Adrenal gland (tissue), 19 donors: ENCODE measurements at regions of chr1 and their contacts with region 1.

Region 1: DNA sequence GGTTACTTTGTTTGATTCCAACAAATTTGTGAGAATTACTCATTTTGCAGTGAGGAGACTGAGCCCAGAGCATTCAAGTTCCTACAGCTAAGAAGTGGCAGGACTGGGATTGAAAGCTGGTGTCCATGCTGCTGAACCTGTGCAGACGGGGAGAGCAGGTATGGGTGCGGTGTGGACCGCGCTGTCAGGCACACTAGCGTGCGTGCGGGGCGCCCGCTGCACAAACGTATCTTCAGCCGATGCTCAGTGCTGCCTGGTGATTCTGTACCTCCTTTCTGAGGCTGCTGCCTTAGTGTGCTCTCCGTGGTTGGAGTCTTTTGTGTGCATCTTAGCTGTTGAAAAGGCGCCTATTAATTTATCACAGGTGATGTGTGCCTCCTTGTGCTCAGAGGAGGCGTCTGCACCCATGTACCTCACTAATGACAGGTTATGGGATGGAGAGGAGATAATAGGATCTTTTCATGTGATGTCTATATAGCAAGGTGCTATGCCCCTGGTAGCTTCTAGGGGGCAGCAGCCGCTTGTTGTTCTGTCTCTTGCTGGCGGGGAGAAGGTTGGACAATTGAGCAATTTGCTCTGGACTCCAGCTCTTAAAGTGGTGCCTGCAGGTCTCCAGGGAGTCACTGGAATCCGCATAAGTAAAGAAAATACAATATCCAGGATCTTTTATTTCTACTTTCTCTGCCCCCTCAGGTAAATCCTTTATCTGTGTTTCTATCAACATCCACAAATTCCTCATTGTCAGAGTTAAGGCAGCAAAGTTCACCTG is 32.5 kb downstream of the PEX14 start:
- DNase-seq: peak; percentile 63 to 88 (median 78)
- H3K4me3 ChIP-seq: no peak overlapping the region
- H3K27ac ChIP-seq: no peak overlapping the region
- H3K4me1 ChIP-seq: peaks cover 15 to 42% of the 10 kb centered on the region in 2 donors
- H3K27me3 ChIP-seq: no peaks in the 10 kb centered on the region
- CTCF ChIP-seq: peak; percentile 70 to 92 (median 84)
- POLR2A ChIP-seq: no peak

Region 2: DNA sequence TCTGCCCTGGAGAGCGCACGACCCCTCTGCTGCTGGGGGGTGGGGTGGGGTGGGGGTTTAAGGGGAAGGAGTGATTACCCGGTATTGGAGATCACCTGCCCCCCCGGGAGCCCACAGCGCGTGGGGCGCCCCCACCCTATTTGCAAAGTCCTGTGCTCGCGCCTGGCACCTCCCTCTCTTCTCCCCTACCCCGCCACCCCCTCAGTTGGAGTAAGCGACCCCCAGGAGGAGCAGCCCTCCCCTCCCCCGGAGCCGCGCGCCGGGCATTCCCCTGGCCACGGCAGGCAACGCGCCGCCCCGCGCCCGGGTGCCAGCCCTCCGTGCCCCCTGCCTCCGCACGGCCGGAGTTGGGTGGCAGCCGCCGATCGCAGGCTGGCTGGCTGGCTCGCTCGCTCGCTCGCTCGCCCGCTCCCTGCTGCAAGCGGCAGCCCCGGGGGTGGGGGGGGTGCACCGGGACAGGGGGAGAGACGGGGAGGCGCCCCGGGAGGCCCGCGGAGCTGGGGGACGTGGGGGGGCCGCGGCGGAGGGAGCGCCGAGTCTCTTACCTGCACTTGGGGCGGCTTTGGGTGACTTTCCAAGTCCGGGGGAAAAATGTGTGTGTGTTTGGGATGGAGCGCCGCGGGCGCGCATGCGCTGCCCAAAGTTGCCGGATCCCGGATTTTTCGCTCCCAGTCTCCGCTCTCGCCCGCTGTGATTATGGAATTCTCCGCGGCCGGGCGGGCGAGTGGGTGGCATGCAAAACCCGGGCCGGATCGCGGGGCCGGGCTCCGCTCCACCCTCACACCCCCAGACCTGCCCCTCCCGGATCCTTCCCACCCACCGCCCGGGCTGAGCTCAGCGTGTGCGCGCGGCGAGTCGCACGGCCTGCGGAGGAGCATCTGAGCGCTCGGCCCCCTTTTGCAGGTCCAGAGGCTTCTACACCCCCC is 289.0 kb after region 1 on chr1 and contains the start of gene CASZ1:
- intact Hi-C with region 1: loop called (anchors 10 kb)
- DNase-seq: peak; percentile 81 to 89 (median 83)
- H3K4me3 ChIP-seq: peak within 1 kb of the TSS in 2 of 4 donors; percentile 43 to 69
- H3K27ac ChIP-seq: peak within 1 kb of the TSS in 1 of 5 donors; percentile 41
- H3K4me1 ChIP-seq: peaks cover 15 to 26% of the 10 kb centered on the region in 2 donors
- H3K27me3 ChIP-seq: no peaks in the 10 kb centered on the region
- CTCF ChIP-seq: peak in 1 of 6 experiments; percentile 35
- POLR2A ChIP-seq: peak; percentile 22 to 86
- total RNA-seq, gene CASZ1: 2.5 to 35.2 (median 7.5) TPM

Region 3: GRCh38 chr1:10867138-10867721 is 359.9 kb after region 1 on chr1:
- intact Hi-C with region 1: loop called (anchors 5 kb)
- DNase-seq: peak; percentile 40 to 77 (median 65)
- H3K4me3 ChIP-seq: peak overlapping the region in 1 of 4 donors; percentile 63
- H3K27ac ChIP-seq: no peak overlapping the region
- H3K4me1 ChIP-seq: peaks cover 4% of the 10 kb centered on the region in 2 donors
- H3K27me3 ChIP-seq: peaks cover 12% of the 10 kb centered on the region
- CTCF ChIP-seq: peak in 4 of 6 experiments; percentile 31 to 89 (median 86)
- POLR2A ChIP-seq: no peak

Region 4: GRCh38 chr1:10909697-10910671 is 402.7 kb after region 1 on chr1:
- intact Hi-C with region 1: no loop called
- DNase-seq: peak; percentile 31 to 66 (median 44)
- H3K4me3 ChIP-seq: no peak overlapping the region
- H3K27ac ChIP-seq: no peak overlapping the region
- H3K4me1 ChIP-seq: no peaks in the 10 kb centered on the region
- H3K27me3 ChIP-seq: no peaks in the 10 kb centered on the region
- CTCF ChIP-seq: peak in 5 of 6 experiments; percentile 7 to 42 (median 19)
- POLR2A ChIP-seq: no peak

Region 5: GRCh38 chr1:10941891-10942541 is 434.7 kb after region 1 on chr1:
- intact Hi-C with region 1: loop called in 1 of 2 experiments (anchors 10 kb)
- DNase-seq: peak; percentile 25 to 76 (median 58)
- H3K4me3 ChIP-seq: no peak overlapping the region
- H3K27ac ChIP-seq: no peak overlapping the region
- H3K4me1 ChIP-seq: peaks cover 0 to 15% of the 10 kb centered on the region in 2 donors
- H3K27me3 ChIP-seq: no peaks in the 10 kb centered on the region
- CTCF ChIP-seq: peak; percentile 54 to 88 (median 80)
- POLR2A ChIP-seq: no peak